ENCODE measurements at regions of chr14 and their contacts with region 1.

Region 1: DNA sequence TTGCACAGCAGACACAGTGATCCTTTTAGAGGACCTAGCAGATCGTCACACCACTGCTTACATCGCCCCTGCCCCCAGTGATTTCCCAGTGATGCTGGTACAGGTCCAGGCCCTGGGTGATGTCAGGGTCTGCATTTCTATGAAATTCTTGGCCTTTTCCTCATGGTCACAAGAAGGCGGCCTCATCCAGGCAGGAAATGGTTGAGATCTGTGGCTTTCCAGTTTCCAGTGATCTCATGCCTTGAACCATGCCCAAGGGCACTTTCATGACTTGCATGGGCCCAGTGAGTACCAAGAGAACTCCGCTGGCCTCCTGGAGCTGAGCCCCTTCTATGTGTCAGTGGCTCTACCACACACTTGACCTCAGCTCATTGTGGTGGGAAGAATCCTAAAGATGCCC is 41.9 kb upstream of the BDKRB2 start:
- DNase-seq: no peak
- H3K4me3 ChIP-seq: no peak overlapping the region
- H3K27ac ChIP-seq: no peak overlapping the region
- H3K4me1 ChIP-seq: peaks cover 6% of the 10 kb centered on the region
- H3K27me3 ChIP-seq: no peaks in the 10 kb centered on the region
- CTCF ChIP-seq: no peak

Region 2: DNA sequence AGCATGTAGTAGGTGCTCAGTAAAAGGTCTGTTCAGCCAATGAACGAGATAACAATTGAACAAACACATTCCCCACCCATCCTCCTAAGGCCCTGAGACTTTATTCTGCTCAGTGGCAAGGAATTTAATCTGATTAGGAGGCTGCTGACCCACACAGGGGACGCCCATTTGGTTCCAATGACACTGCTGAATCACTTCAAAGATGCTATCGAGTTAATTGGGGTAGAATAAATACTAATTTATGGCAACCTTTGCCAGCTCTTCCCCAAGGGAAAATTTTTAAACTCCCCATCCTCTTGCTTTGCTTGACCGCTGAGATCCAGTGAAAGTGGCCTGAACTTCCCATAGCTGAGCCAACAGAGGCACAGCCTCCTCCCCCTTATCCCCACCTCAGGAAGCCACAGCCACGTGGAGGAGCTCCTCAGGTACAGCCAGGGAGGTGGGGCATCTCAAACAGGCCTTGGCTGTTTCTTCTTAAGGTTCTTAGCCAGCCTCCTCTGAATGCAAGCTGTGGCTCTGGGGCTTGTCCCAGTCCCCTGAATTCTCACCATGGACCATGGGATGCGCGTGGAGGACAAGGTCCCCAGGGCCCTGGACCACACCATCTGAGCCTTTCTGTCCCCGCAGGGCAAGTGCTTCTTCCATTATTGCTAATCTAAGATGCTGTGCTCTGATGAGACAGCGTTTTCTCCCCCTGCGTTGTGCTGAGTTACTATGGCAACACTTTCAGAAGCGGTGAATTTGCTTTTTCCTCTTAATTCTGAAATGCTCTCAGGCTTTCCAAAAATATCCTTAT is 96.9 kb before region 1 on chr14:
- CTCF ChIA-PET with region 1: no interaction called
- dilution Hi-C with region 1: no loop called
- in situ Hi-C with region 1: no loop called
- intact Hi-C with region 1: no loop called
- DNase-seq: no peak
- H3K4me3 ChIP-seq: no peak overlapping the region
- H3K27ac ChIP-seq: no peak overlapping the region
- H3K4me1 ChIP-seq: no peaks in the 10 kb centered on the region
- H3K27me3 ChIP-seq: peaks cover 14% of the 10 kb centered on the region
- CTCF ChIP-seq: no peak

Region 3: DNA sequence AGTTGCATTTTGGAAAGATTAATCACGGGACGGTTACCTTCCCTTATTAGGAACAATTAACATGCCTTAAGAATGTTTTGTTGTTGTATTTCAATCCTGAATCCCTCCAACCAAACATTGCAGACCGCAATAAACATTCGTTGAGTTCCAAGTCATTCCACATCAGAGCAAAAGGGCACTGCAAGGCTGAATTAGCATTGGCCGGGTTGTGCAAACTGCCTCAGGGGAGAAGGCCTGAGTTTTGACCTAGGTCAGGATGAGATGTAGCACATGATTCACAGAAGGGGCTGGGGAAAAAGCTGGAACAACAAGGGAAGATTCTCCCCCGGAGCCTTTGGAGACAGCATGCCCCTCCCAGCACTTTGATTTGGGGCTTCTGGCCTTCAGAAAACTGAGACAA is 40.2 kb before region 1 on chr14:
- CTCF ChIA-PET with region 1: no interaction called
- dilution Hi-C with region 1: loop called (anchors 5 kb)
- in situ Hi-C with region 1: no loop called
- intact Hi-C with region 1: no loop called
- DNase-seq: no peak
- H3K4me3 ChIP-seq: no peak overlapping the region
- H3K27ac ChIP-seq: no peak overlapping the region
- H3K4me1 ChIP-seq: no peaks in the 10 kb centered on the region
- H3K27me3 ChIP-seq: no peaks in the 10 kb centered on the region
- CTCF ChIP-seq: no peak

Region 4: DNA sequence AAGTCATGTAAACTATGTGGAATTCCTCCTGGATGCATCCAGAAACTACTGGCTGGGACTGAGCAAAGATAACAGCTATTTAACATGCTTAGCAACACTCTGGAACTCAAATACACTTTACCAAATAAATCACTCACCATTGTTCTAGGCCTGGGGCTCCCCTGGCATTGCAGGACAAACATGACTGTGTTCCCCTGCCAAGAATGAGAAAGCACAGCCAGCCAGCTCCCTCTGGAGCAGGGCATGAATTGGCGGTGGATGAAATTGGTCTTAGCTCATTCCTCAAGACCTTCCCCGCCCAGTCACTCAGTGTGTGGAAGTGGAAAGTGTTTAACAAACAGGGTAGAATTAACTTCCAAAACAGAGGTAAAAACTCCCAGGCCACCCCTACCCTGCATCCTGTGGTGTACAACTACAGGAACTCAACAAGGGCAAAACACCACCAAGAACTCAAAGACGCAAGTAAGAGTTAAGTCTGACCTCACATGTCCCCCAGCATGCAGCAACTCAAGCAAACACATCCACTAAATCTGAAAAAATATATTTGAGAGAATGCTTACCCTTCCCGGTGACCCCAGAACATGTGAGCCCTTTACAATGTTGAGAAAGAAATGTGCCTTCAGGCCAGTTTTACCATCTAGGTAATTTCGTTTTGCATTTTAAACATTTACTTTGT is 16.5 kb before region 1 on chr14:
- CTCF ChIA-PET with region 1: no interaction called
- dilution Hi-C with region 1: no loop called
- in situ Hi-C with region 1: no loop called
- intact Hi-C with region 1: no loop called
- DNase-seq: peak; percentile 29
- H3K4me3 ChIP-seq: no peak overlapping the region
- H3K27ac ChIP-seq: no peak overlapping the region
- H3K4me1 ChIP-seq: no peaks in the 10 kb centered on the region
- H3K27me3 ChIP-seq: no peaks in the 10 kb centered on the region
- CTCF ChIP-seq: no peak

Region 5: DNA sequence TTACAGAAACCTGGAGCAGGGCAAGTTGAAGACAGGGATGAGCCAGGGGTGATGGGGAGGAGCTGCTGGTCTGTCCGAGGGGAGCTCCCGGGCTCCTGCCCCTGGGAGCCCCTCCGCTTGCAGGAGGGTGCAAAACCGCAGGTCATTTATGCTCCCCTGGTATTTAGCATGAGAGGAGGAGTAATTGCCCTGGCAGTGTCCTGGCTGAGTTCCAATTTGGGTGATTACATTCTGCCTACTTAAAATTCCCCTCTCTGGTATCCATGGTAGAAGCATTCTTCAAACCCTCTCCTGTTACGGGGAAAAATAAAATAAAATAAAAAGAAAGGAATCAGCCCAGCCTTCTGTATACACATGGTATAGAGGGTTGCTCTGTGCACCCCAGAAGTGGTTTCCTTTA is 572.8 kb after region 1 on chr14:
- CTCF ChIA-PET with region 1: no interaction called
- dilution Hi-C with region 1: no loop called
- in situ Hi-C with region 1: no loop called
- intact Hi-C with region 1: no loop called
- DNase-seq: no peak
- H3K4me3 ChIP-seq: no peak overlapping the region
- H3K27ac ChIP-seq: no peak overlapping the region
- H3K4me1 ChIP-seq: no peaks in the 10 kb centered on the region
- H3K27me3 ChIP-seq: peaks cover 19% of the 10 kb centered on the region
- CTCF ChIP-seq: no peak